ENCODE measurements at regions of chr16 and their contacts with region 1.

Region 1: GRCh38 chr16:68995011-68995504 is 110.4 kb upstream of the HAS3 start:
- DNase-seq: peak; percentile 98
- H3K4me3 ChIP-seq: no peak overlapping the region
- H3K27ac ChIP-seq: peak overlapping the region; percentile 92
- H3K4me1 ChIP-seq: peaks cover 76% of the 10 kb centered on the region
- H3K27me3 ChIP-seq: no peaks in the 10 kb centered on the region
- CTCF ChIP-seq: peak; percentile 8 to 59

Region 2: DNA sequence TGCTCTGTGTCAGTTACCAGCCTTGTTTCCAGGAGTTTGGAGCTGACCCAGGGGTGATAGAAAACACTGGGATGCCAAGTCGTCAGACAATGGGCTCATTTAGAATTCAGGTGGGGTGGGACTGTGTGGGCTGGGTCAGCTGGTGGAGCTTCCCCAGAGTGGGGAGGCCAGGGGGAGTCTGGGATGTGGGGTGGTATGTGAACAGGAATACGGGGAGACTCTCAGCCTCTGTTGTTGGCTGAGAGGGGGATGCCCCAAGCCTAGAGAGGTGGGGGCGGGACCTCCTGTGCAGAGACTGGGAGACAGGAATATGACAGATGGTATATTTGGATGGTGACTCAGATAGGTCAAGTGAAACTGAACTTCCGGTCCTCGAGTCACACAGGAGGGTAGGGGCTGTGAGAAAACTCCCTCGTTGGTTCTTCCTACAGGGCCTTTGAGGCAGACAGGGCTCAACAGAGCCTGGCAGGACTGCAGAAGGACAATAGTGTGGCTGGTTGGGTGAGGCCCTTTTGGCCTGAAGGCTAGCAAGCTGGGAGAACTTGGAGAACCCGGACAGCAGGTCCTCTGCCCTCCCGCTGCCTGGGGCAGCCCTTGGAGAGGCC is 234.3 kb before region 1 on chr16:
- CTCF ChIA-PET with region 1: no interaction called
- dilution Hi-C with region 1: no loop called
- in situ Hi-C with region 1: no loop called
- intact Hi-C with region 1: no loop called
- DNase-seq: peak; percentile 99
- H3K4me3 ChIP-seq: no peak overlapping the region
- H3K27ac ChIP-seq: peak overlapping the region; percentile 99
- H3K4me1 ChIP-seq: peaks cover 49% of the 10 kb centered on the region
- H3K27me3 ChIP-seq: no peaks in the 10 kb centered on the region
- CTCF ChIP-seq: no peak

Region 3: DNA sequence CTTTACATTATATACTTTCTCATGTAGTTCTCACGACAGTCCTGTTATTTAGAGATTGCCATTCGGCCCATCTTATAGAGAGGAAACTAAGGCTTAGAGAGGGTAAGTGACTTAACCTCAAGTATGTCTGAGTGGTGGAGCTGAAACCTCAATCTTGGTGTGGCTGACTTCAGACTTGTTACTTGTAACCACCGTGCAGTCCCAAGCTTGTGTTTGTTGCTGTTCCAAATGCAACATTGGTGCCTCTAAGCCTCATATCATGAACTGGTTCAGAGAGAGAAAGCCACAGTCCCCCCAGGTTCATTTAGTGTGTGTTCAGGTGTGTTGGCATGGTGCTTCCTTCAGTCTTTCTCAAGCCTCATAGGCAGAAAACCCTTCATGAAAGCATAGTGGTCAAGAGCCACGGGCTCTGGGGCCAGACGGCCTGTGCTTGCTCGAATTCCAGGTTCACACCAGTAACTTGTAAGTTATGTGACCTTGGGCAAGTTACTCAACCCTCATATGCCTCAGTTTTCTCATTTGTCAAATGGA is 218.2 kb before region 1 on chr16:
- CTCF ChIA-PET with region 1: no interaction called
- dilution Hi-C with region 1: no loop called
- in situ Hi-C with region 1: no loop called
- intact Hi-C with region 1: no loop called
- DNase-seq: peak; percentile 56
- H3K4me3 ChIP-seq: no peak overlapping the region
- H3K27ac ChIP-seq: peak overlapping the region; percentile 2
- H3K4me1 ChIP-seq: peaks cover 27% of the 10 kb centered on the region
- H3K27me3 ChIP-seq: no peaks in the 10 kb centered on the region
- CTCF ChIP-seq: no peak

Region 4: GRCh38 chr16:68921654-68922053 is 73.4 kb before region 1 on chr16:
- CTCF ChIA-PET with region 1: interaction called, 3 read pairs
- dilution Hi-C with region 1: no loop called
- in situ Hi-C with region 1: no loop called
- intact Hi-C with region 1: loop called (anchors 1 kb)
- DNase-seq: peak; percentile 96
- H3K4me3 ChIP-seq: no peak overlapping the region
- H3K27ac ChIP-seq: peak overlapping the region; percentile 89
- H3K4me1 ChIP-seq: peaks cover 43% of the 10 kb centered on the region
- H3K27me3 ChIP-seq: no peaks in the 10 kb centered on the region
- CTCF ChIP-seq: no peak

Region 5: GRCh38 chr16:68936736-68937631 is 58.1 kb before region 1 on chr16:
- CTCF ChIA-PET with region 1: no interaction called
- dilution Hi-C with region 1: no loop called
- in situ Hi-C with region 1: no loop called
- intact Hi-C with region 1: loop called (anchors 2 kb)
- DNase-seq: peak; percentile 98
- H3K4me3 ChIP-seq: peak overlapping the region in 1 of 3 experiments; percentile 16
- H3K27ac ChIP-seq: peak overlapping the region; percentile 58
- H3K4me1 ChIP-seq: peaks cover 39% of the 10 kb centered on the region
- H3K27me3 ChIP-seq: no peaks in the 10 kb centered on the region
- CTCF ChIP-seq: no peak

Region 6: DNA sequence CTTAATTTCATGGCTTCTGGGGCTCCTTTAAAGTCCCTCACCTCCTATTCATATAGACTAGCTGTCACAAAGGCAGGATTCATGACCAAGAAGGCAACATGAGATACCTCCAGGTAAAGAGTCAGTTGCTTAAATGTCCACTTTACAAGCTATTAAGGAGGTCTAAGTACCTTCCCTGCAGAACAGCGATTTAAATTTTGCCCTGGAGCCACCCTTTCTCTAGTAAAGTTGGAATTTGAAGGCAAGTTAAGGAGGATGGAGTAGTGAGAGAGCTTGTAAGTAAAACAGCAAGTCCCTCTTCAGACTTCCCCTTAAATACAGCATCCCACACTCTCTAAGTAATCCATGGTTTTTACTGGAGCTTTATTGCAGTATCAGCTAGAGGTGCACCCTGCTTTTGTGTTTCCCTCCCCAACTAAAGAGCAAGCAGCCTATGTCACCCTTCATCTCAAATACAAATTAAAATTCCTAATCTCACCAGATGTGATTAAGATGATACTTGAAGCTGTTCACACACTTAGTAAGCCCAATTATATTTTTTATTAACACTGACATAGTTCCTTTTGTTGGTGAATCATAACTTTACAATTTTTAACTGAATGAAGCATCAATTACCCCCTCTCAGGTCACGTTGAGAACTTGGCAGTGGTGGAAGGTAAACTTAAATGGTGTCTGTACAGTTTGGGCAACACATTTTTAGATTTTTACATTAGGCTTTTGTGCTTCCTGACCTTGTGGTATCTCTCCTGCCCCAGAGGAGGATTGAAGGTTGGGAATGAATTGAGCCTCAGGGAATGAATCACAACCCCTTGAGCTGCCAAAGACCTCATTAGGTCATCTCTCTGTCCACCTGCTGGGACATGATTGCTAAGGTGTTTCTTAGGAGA is 42.8 kb before region 1 on chr16:
- CTCF ChIA-PET with region 1: no interaction called
- dilution Hi-C with region 1: loop called (anchors 5 kb)
- in situ Hi-C with region 1: no loop called
- intact Hi-C with region 1: loop called (anchors 5 kb)
- DNase-seq: peak; percentile 94
- H3K4me3 ChIP-seq: no peak overlapping the region
- H3K27ac ChIP-seq: peak overlapping the region; percentile 79
- H3K4me1 ChIP-seq: peaks cover 20% of the 10 kb centered on the region
- H3K27me3 ChIP-seq: no peaks in the 10 kb centered on the region
- CTCF ChIP-seq: no peak

Region 7: DNA sequence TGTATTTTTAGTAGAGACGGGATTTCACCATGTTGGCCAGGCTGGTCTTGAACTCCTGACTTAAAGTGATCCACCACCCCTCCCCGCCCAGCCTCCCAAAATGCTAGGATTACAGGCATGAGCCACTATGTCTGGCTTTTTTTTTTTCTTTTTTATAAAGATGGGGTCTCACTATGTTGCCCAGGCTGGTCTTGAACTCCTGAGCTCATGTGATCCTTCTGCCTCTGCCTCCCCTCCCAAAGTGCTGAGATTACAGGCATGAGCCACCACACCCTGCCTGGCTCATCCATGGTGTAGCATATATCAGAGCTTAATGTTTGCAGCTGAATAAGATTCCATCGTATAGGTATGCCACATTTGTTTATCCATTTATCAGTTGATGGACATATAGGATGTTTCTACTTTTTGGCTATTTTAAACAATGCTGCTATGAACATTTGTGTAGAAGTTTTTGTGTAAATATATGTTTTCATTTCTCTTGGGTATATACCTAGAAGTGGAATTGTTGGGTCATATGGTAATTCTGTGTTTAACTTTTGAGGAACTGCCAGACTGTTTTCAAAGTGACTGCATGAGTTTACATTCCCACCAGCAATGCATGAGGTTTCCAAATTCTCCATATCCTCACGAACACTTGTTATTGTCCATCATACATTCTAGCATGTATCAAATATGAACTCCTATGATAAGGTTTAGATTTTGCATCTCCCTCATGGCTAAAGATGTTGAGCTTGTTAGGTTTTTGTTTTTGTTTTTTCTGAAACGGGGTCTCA is 54.7 kb after region 1 on chr16:
- CTCF ChIA-PET with region 1: no interaction called
- dilution Hi-C with region 1: no loop called
- in situ Hi-C with region 1: no loop called
- intact Hi-C with region 1: loop called (anchors 2 kb)
- DNase-seq: no peak
- H3K4me3 ChIP-seq: no peak overlapping the region
- H3K27ac ChIP-seq: no peak overlapping the region
- H3K4me1 ChIP-seq: peaks cover 12% of the 10 kb centered on the region
- H3K27me3 ChIP-seq: no peaks in the 10 kb centered on the region
- CTCF ChIP-seq: no peak

Region 8: DNA sequence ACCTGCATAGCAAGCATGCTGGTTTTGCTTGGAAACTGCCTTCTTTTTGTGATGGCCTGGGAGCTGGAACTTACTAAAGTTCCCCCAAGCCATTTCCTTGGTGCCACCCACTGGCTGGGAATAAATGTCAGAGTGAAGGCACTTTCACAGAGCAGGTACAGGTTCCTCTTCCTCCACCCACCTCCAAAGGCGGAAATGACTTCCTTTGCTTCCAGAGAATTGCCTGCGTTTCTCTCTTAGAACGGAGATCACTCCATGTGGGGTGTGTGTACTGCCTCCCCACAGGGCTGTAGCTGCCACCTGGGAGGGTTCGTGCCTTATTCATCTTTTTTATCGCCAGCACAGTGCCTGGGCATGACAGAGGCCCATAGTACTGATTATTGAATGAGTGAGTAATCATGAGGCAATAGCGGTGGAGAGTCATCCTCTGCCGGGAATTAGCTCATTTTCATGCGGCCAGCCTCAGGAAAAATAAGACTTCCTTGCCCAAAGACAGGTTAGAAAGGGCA is 78.2 kb after region 1 on chr16:
- CTCF ChIA-PET with region 1: no interaction called
- dilution Hi-C with region 1: loop called (anchors 5 kb)
- in situ Hi-C with region 1: no loop called
- intact Hi-C with region 1: loop called (anchors 1 kb)
- DNase-seq: peak; percentile 98
- H3K4me3 ChIP-seq: no peak overlapping the region
- H3K27ac ChIP-seq: peak overlapping the region; percentile 79
- H3K4me1 ChIP-seq: peaks cover 35% of the 10 kb centered on the region
- H3K27me3 ChIP-seq: no peaks in the 10 kb centered on the region
- CTCF ChIP-seq: peak in 1 of 2 donors; percentile 7

Region 9: DNA sequence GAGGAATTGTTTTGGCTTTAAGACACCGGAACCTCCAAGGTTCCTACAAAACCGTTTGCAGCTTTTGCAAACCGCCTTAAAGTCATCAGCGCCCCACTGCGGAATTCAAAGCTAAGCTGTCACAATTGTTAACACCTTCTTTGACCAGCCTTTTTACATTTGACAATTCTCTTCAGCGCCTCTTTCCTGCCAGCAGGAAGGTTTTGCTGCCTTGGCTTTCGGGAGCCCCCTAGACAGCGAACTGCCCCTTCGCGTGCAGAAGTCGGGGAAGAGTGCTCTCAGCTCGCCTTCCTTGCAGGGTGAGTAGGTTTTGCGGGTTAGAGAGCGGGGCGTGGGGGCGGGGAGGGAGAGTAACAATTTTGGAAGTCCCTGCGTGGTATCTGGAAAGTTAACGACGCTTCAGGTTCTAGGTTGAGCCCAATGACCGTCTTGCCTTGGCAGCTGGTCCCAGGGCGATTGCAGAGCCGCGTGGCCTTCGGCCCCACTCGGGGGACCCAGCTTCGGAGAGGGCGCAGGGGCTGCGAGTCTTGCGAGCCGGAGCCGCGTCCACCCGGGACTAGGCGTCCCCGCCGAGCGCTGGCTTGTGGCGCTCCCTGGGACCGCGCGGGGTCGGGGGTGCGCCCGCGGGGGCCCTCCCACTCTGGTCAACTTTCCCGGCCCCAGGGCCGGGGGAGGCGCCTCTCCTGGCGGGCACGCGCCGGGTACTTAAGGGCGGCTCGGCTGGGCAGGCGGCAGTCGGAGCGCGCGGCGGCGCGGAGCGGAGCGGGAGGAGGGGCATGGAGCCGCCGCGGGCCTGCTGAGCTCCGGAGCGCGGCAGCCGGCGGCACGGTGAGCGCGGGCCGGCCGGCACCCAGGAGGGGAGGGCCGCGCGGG is 110.7 kb after region 1 on chr16 and contains the start of gene HAS3:
- CTCF ChIA-PET with region 1: no interaction called
- dilution Hi-C with region 1: no loop called
- in situ Hi-C with region 1: loop called in 1 of 2 experiments (anchors 10 kb)
- intact Hi-C with region 1: loop called (anchors 1 kb)
- DNase-seq: peak; percentile 75
- H3K4me3 ChIP-seq: peak within 1 kb of the TSS; percentile 75 to 88 (median 80)
- H3K27ac ChIP-seq: no peak within 1 kb of the TSS
- H3K4me1 ChIP-seq: peaks cover 48% of the 10 kb centered on the region
- H3K27me3 ChIP-seq: no peaks in the 10 kb centered on the region
- CTCF ChIP-seq: peak; percentile 39 to 75
- total RNA-seq, gene HAS3: 38.2 to 133 TPM

Region 10: GRCh38 chr16:69157196-69157595 is 162.1 kb after region 1 on chr16:
- CTCF ChIA-PET with region 1: no interaction called
- dilution Hi-C with region 1: no loop called
- in situ Hi-C with region 1: no loop called
- intact Hi-C with region 1: no loop called
- DNase-seq: no peak
- H3K4me3 ChIP-seq: no peak overlapping the region
- H3K27ac ChIP-seq: no peak overlapping the region
- H3K4me1 ChIP-seq: no peaks in the 10 kb centered on the region
- H3K27me3 ChIP-seq: no peaks in the 10 kb centered on the region
- CTCF ChIP-seq: no peak

Region 11: DNA sequence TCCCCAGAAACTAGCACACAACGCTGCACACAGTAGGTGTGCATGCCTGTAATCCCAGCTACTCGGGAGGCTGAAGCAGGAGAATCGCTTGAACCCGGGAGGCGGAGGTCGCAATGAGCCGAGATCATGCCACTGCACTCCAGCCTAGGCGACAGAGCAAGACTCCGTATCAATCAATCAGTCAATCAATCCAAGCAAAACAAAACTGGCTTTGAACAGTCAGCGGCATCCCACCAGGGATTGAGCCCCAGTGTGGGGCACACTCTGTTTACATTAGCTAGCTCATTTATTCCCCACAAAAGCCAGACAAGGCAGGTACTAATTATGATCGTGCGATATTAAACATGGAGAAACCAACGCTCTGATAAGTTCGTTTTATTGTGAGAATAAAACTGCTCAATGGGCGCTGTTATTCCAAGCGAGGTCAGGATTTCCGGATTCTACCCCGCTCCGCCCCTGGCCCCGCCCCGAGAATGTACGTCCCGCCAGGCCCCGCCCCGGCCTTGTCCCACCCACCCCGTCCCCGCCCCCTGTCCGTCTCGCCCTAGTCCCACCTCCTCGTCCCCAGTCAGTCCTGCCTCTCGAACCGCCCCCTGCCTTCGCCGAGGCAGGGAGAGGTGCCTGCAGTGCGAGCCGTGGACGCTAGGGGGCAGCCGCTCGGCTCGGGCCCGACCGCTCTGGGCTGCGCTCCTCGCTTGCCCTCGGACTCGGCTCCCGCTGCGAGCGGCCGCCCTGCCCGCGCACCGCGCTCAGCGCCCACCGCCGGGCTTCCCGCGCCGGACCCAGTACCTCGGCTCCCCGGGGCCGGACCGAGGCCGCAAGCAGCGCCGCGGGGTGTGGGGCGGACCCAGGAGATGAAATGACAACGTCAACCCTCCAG is 315.8 kb after region 1 on chr16 and contains the start of gene VPS4A:
- CTCF ChIA-PET with region 1: no interaction called
- dilution Hi-C with region 1: no loop called
- in situ Hi-C with region 1: no loop called
- intact Hi-C with region 1: no loop called
- DNase-seq: peak; percentile 95
- H3K4me3 ChIP-seq: peak within 1 kb of the TSS; percentile 83 to 94 (median 85)
- H3K27ac ChIP-seq: peak within 1 kb of the TSS; percentile 52
- H3K4me1 ChIP-seq: peaks cover 5% of the 10 kb centered on the region
- H3K27me3 ChIP-seq: no peaks in the 10 kb centered on the region
- CTCF ChIP-seq: peak; percentile 82
- total RNA-seq, gene VPS4A: 32.0 to 38.4 TPM